Activated naive CD4-positive, alpha-beta T cell treated with anti-CD3 and anti-CD28 coated beads for 36 hours (primary cell): ENCODE measurements at regions of chr1 and their contacts with region 1.

Region 1: DNA sequence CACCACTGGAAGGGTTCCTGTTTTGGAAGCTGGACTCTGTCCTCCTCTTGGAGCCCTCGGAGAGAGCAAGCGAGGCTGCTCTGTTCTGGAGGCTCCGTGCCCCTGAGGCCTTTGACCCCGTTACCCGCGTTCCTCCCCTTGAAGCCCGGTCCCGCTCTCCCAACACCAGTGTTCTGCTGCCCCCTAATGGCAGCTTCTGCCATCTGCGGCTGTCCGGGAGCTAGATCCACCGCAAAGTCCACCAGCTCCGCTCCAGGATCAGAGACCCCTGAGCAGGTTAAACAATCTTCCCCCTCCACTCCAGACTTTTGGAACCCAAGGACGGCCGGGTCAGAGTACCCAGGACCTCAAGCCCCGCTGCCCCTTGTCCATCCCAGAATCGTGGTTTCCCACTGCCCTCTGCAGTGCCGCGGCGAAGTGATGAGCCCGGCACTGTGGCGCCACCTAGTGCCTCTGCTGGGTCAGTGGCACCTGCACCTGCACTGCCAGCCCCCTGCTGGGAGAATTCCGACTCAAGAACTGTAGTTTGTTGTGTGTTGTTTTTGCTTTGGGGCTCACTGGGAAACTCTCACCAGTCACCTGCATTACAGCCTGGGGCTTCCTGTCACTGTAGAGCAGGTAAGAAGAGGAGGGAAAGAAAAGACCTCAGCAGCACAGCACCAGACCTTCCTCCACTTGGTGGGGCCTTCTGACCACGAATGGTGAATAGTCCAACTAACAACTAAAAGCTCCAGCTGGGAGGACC is 63.5 kb upstream of the NFASC start:
- DNase-seq: peak; percentile 92
- H3K4me3 Mint-ChIP-seq: peak overlapping the region; percentile 76
- H3K27ac Mint-ChIP-seq: peak overlapping the region; percentile 74
- H3K4me1 Mint-ChIP-seq: peaks cover 9% of the 10 kb centered on the region
- H3K27me3 Mint-ChIP-seq: no peaks in the 10 kb centered on the region

Region 2: GRCh38 chr1:204446370-204447111 is 360.6 kb before region 1 on chr1:
- CTCF ChIA-PET with region 1: interaction called, 7 read pairs
- intact Hi-C with region 1: loop called (anchors 1 kb)
- DNase-seq: peak; percentile 88
- H3K4me3 Mint-ChIP-seq: no peak overlapping the region
- H3K27ac Mint-ChIP-seq: peak overlapping the region; percentile 77
- H3K4me1 Mint-ChIP-seq: peaks cover 54% of the 10 kb centered on the region
- H3K27me3 Mint-ChIP-seq: no peaks in the 10 kb centered on the region

Region 3: DNA sequence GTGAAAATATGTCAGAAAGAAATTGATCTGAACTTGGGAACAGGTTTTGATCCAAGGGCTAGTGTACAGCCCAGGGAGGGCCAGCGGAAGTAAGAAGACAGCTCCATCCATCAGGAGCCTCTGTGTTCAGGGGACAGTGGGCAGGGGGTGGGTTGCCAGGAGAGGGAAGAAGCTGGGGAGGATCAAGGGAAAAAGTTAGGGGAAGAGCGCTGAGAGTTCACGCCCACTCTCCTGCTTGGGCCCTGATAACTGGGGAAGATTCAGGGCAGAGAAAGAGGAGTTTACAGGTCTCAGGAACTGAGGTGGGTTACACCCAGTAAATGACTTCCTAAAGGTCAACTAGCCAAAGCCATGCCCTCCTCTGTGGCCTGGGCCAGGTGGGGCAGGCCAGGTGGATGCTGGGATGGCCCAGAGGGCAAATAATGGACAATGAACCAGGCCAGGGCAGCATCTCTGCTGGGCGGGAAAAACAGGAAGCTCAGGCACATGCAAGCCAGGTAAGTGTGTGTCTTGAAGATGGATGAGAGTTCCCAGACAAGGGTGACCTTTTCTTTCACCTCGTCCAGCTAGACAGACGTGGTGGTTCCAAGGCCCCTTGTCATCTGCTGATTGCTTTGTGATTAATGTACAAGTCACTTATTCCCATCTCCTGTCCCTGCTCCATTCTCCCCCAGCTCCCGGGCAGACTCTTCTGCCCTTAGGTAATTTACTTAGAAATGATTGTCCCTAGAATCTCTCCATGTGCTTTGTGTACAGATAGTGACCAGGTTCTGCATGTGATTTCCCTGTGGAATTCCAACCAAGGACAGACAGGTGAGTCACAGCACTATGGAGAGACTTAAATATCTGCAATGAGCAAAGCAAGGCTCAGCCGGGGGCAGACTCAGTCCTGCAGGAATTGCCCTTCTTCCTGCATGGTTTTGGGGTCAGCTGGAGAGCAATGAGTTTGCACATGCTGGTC is 233.9 kb before region 1 on chr1:
- CTCF ChIA-PET with region 1: interaction called, 89 read pairs
- intact Hi-C with region 1: no loop called
- DNase-seq: no peak
- H3K4me3 Mint-ChIP-seq: no peak overlapping the region
- H3K27ac Mint-ChIP-seq: peak overlapping the region; percentile 6
- H3K4me1 Mint-ChIP-seq: peaks cover 3% of the 10 kb centered on the region
- H3K27me3 Mint-ChIP-seq: no peaks in the 10 kb centered on the region

Region 4: GRCh38 chr1:204692325-204692840 is 114.7 kb before region 1 on chr1:
- CTCF ChIA-PET with region 1: interaction called, 12 read pairs
- intact Hi-C with region 1: no loop called
- DNase-seq: no peak
- H3K4me3 Mint-ChIP-seq: no peak overlapping the region
- H3K27ac Mint-ChIP-seq: no peak overlapping the region
- H3K4me1 Mint-ChIP-seq: peaks cover 9% of the 10 kb centered on the region
- H3K27me3 Mint-ChIP-seq: peaks cover 2% of the 10 kb centered on the region

Region 5: GRCh38 chr1:204782118-204782700 is 24.9 kb before region 1 on chr1:
- CTCF ChIA-PET with region 1: interaction called, 15 read pairs
- intact Hi-C with region 1: no loop called
- DNase-seq: no peak
- H3K4me3 Mint-ChIP-seq: no peak overlapping the region
- H3K27ac Mint-ChIP-seq: no peak overlapping the region
- H3K4me1 Mint-ChIP-seq: no peaks in the 10 kb centered on the region
- H3K27me3 Mint-ChIP-seq: peaks cover 2% of the 10 kb centered on the region

Region 6: DNA sequence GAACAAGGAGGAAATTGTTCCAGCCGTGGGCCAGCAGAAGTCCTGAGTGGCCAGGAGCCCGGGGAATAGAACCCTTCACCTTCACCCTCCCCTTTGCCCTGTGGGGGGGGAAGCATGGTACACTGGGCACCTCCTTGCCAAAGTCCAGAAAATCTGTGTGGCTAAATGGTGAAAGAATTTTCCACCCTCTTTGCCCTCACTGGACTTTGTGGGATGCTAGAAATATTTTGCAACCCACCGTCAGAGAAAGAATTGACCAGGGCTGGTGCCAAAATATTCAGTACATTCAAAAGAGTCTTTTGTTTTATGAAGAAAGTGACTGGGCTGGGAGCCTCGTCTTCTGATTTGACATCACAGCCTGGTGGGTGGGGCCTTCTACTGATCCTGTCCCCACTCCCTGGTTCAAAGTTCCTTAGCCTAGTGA is 78.2 kb after region 1 on chr1:
- CTCF ChIA-PET with region 1: no interaction called
- intact Hi-C with region 1: no loop called
- DNase-seq: no peak
- H3K4me3 Mint-ChIP-seq: no peak overlapping the region
- H3K27ac Mint-ChIP-seq: no peak overlapping the region
- H3K4me1 Mint-ChIP-seq: no peaks in the 10 kb centered on the region
- H3K27me3 Mint-ChIP-seq: peaks cover 7% of the 10 kb centered on the region

Region 7: DNA sequence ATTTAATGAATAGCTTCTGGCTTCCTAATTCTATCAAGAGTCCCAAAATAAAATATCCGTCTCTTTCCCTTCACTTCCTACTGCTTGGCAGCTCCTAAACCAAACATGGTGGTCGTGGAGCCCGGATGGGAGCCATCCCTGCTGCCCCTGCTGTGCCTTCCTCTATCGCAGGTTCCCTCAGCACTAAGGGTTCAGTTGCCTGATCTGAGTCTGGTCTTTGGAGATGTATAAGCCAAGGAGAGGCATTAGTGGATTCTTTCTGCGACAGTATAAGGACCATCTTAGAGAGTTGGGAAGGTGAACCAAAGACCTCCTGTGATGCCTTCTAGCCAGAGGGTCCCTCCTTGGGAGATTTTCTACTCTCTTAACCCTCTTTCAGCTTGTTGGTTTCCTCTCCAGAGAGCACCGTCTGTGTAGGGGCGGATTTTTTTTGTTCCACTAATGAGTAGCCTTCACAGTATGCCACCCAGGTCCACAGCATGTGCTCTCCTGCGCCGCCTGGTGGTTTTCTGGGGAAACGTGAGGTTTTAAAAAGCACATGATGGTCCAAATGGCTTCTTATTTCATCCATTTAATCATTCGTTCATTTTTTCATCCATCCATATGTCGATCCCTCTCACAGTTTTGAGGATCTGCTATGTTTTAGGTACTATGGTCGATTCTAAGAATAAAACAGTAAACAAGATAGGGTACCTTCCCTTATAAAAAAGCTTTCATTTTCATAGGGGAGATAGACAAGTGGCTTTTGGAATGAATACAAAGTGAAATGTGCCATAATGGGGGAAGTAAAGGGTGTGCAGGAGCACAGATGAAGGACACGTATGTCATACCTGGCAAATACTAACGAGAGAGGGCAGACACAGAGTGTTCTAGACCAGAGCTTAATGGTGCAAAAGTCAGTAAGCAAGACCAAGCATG is 134.6 kb after region 1 on chr1:
- CTCF ChIA-PET with region 1: interaction called, 17 read pairs
- intact Hi-C with region 1: loop called (anchors 1 kb)
- DNase-seq: peak; percentile 83
- H3K4me3 Mint-ChIP-seq: no peak overlapping the region
- H3K27ac Mint-ChIP-seq: no peak overlapping the region
- H3K4me1 Mint-ChIP-seq: no peaks in the 10 kb centered on the region
- H3K27me3 Mint-ChIP-seq: peaks cover 6% of the 10 kb centered on the region